ENCODE measurements at regions of chr3 and their contacts with region 1.

Region 1: GRCh38 chr3:148084931-148085330 is 612.8 kb upstream of the AGTR1 start:
- DNase-seq: peak; percentile 45
- ATAC-seq: peak; percentile 98
- H3K4me3 ChIP-seq: no peak overlapping the region
- H3K27ac ChIP-seq: no peak overlapping the region
- H3K4me1 ChIP-seq: no peaks in the 10 kb centered on the region
- H3K27me3 ChIP-seq: no peaks in the 10 kb centered on the region
- CTCF ChIP-seq: no peak
- EP300 ChIP-seq: no peak
- POLR2A ChIP-seq: no peak
- RAD21 ChIP-seq: no peak

Region 2: GRCh38 chr3:148297013-148297412 is 212.1 kb after region 1 on chr3:
- CTCF ChIA-PET with region 1: no interaction called
- POLR2A ChIA-PET with region 1: no interaction called
- RAD21 ChIA-PET with region 1: no interaction called
- SMC1A ChIA-PET with region 1: no interaction called
- in situ Hi-C with region 1: no loop called
- intact Hi-C with region 1: loop called (anchors 5 kb)
- DNase-seq: no peak
- ATAC-seq: no peak
- H3K4me3 ChIP-seq: no peak overlapping the region
- H3K27ac ChIP-seq: no peak overlapping the region
- H3K4me1 ChIP-seq: peaks cover 7% of the 10 kb centered on the region
- H3K27me3 ChIP-seq: no peaks in the 10 kb centered on the region
- CTCF ChIP-seq: no peak
- EP300 ChIP-seq: no peak
- POLR2A ChIP-seq: no peak
- RAD21 ChIP-seq: no peak